HEK293 (cell line): ENCODE measurements at regions of chr19 and their contacts with region 1.

Region 1: DNA sequence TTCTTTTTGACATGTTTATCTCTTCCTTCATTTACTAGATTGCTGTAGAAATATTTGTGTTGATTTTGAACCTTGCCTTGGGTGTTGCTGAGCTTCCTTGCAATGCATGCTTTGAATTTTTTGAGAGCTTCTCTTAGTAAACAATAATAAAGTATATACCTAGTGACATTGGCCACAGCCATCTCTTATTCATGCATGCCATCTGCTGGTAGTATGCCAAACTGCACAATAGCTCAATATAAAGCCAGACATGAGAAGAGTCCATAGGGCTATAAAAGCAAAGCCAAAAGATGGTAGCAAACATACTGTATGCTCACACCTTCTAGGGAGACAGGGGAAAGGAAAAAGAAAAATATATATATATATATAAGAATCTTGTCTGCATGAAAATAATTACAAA is 18.9 kb upstream of the ZSCAN5A start:
- H3K4me3 ChIP-seq: no peak overlapping the region
- H3K27ac ChIP-seq: no peak overlapping the region
- H3K4me1 ChIP-seq: no peaks in the 10 kb centered on the region
- CTCF ChIP-seq: no peak

Region 2: DNA sequence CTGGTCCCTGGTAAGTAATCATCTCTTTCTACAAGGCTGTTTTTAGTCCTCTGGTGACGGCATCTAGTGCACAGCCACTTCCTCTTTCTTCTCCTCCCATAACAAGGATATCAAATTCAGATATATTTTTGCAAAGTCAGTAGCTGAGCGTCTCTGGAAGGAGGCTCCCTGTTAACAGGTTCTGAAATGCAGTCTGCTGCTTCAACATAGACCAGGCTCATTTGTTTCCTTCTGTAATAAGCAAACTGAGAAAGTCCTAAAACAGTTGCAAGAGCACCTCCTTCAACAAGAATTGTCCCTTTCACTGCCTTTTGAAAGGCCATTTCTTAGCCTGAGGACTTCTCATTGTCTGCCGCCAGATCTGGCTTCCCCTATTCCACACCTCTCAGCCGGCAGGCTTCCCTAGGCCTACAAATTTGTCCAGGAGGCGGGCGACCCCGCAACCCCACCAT is 11.5 kb before region 1 on chr19:
- CTCF ChIA-PET with region 1: interaction called, 12 read pairs
- POLR2A ChIA-PET with region 1: no interaction called
- H3K4me3 ChIP-seq: no peak overlapping the region
- H3K27ac ChIP-seq: no peak overlapping the region
- H3K4me1 ChIP-seq: no peaks in the 10 kb centered on the region
- CTCF ChIP-seq: no peak

Region 3: GRCh38 chr19:56423276-56423984 is 89.9 kb after region 1 on chr19:
- CTCF ChIA-PET with region 1: no interaction called
- POLR2A ChIA-PET with region 1: no interaction called
- H3K4me3 ChIP-seq: no peak overlapping the region
- H3K27ac ChIP-seq: no peak overlapping the region
- H3K4me1 ChIP-seq: no peaks in the 10 kb centered on the region
- CTCF ChIP-seq: no peak